ENCODE measurements at regions of chr19 and their contacts with region 1.

Region 1: DNA sequence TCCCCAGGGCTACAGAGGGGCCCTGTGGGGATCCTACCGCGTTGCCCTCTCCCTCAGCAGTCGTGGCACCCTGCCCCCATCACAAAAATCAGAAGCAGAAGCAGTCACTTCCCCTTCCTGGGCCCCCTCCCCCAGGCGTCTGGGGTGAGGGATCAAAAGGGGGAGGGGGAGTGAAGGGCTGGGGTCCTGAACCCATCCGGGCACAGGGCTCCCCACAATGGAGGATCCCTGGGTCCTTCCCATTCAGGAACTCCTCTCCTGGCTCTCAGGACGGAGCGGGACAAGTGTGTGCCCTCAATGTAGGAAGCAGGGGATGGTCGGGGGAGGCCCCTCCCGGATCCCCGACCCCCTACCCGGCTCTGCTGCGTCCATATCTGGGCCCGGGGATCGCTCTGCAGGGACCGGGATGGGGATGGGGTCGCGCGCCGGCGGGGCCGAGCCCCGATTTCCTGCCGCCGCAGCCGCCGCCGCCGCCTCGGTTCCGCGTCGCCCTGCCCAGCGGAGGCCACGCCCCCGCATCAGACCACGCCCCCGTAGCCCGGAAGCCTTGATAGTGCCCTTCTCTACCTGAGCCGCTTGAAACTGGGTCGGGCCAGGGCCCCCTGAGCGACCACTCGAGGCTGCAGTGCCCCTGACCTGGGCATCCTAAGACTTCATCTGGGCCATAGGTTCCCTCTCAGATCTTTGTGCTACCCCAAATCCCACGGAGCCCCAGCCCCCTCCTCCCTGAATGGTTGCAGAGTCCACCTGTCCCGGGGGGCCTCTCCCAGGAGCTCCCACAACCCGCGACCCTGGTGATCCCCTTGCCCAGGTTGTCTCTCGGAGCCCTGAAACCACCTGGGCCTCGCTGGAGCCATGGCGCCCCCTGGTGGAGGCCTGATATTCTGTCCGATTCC is at the start of gene GMIP:
- DNase-seq: no peak
- ATAC-seq: peak; percentile 94
- H3K4me3 ChIP-seq: peak within 1 kb of the TSS; percentile 96
- H3K27ac ChIP-seq: peak within 1 kb of the TSS; percentile 99
- H3K4me1 ChIP-seq: peaks cover 4% of the 10 kb centered on the region
- H3K27me3 ChIP-seq: no peaks in the 10 kb centered on the region
- CTCF ChIP-seq: peak; percentile 78 to 90 (median 81)
- EP300 ChIP-seq: no peak
- POLR2A ChIP-seq: peak; percentile 78
- RAD21 ChIP-seq: peak; percentile 90
- polyA plus RNA-seq, gene GMIP: 1.5 to 2.8 TPM

Region 2: GRCh38 chr19:19167612-19168011 is 475.8 kb before region 1 on chr19:
- CTCF ChIA-PET with region 1: no interaction called
- POLR2A ChIA-PET with region 1: no interaction called
- RAD21 ChIA-PET with region 1: no interaction called
- SMC1A ChIA-PET with region 1: no interaction called
- in situ Hi-C with region 1: no loop called
- intact Hi-C with region 1: no loop called
- DNase-seq: no peak
- ATAC-seq: no peak
- H3K4me3 ChIP-seq: peak overlapping the region; percentile 9; the same call in 1 of the 2 replicates
- H3K27ac ChIP-seq: peak overlapping the region; percentile 1
- H3K4me1 ChIP-seq: peaks cover 24% of the 10 kb centered on the region
- H3K27me3 ChIP-seq: no peaks in the 10 kb centered on the region
- CTCF ChIP-seq: no peak
- EP300 ChIP-seq: no peak
- POLR2A ChIP-seq: no peak
- RAD21 ChIP-seq: no peak

Region 3: DNA sequence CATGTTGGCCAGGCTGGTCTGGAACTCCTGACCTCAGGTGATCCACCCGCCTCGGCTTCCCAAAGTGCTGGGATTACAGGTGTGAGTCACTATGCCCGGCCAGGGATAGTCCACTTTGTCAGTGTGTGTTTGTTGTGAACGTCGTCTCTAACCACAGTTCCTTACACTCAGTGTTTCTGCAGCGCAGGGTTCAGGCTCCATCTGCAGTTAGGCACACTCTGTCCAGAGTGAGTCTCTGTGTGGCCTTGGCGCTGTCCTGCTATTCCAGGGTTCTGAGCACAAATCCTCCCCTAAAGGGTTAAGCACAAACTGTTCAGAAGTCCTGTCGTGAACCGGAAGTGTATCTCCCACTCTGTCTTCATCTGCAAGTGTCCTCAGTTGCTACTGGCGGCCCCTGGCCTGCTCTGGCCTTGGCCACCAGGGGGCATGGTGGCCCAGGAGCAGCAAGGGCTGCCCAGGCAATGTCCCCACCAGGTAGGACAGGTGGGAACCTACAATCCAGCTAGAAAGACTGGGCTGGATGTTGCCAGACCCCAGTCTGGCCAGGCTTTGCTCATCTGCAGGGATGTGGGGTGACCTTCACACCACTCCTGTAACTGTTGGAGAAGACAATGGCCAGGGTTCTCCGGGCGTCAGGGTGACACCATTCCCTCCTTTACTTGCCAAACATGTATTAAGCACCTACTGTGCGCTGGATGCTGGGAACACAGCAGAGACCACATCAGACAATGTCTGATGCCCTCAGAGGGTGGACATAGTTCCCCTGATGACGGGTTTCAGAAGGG is 276.6 kb before region 1 on chr19:
- CTCF ChIA-PET with region 1: no interaction called
- POLR2A ChIA-PET with region 1: no interaction called
- RAD21 ChIA-PET with region 1: no interaction called
- SMC1A ChIA-PET with region 1: no interaction called
- in situ Hi-C with region 1: no loop called
- intact Hi-C with region 1: loop called (anchors 5 kb)
- DNase-seq: no peak
- ATAC-seq: peak; percentile 95
- H3K4me3 ChIP-seq: no peak overlapping the region
- H3K27ac ChIP-seq: no peak overlapping the region
- H3K4me1 ChIP-seq: peaks cover 3% of the 10 kb centered on the region; the same call in 1 of the 2 replicates
- H3K27me3 ChIP-seq: no peaks in the 10 kb centered on the region
- CTCF ChIP-seq: peak; percentile 94 to 99 (median 96)
- EP300 ChIP-seq: no peak
- POLR2A ChIP-seq: no peak
- RAD21 ChIP-seq: peak; percentile 85